ENCODE measurements at regions of chr12 and their contacts with region 1.

Region 1: DNA sequence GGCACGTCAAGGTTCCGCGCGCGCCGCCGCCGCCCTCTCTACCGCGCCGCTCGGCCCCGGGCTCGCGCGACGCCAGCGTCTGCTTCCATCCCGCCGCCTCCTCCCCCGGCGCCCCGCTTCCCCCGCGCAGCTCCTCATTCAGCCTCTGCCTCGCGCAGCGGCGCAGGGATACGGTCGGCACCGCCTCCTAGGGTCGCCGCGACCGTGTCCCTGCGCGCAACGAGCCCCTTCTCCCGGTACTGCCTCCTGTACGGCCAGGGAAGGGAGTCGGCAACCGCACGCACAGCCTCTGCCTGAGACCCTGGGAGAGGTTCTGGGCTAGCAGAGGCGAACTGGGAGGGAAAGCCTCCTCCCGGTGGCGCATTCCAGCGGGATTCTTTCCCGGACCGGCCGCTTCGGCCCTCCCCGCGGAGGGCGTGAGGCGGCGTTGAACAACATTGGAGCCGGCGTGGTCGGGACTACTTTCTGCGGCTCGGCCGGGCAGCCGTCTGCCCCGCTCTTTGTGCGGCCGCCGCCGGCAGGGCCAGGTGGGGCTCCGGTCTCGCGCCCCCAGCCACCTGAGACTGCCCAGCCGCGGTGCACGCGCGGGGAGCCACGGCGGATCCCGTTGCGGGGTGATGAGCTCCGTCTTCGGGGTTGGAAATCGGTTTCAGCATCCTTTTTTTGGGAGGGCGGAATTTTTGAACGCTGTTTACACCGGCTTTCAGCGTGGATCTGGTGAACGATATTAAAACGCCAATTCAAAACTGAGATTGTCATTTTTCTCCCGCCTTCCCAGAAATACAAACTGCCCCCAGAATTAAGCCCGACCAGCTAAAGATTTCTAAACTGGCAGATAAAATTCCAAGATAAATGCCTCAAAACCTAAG is at the start of gene LRP6:
- DNase-seq: peak; percentile 92
- H3K4me3 Mint-ChIP-seq: peak within 1 kb of the TSS; percentile 92
- H3K27ac Mint-ChIP-seq: peak within 1 kb of the TSS; percentile 97
- H3K4me1 Mint-ChIP-seq: peaks cover 22% of the 10 kb centered on the region
- H3K27me3 Mint-ChIP-seq: no peaks in the 10 kb centered on the region
- CTCF ChIP-seq: peak; percentile 21
- total RNA-seq, gene LRP6: 64.7 and 74.8 TPM in 2 replicates

Region 2: GRCh38 chr12:12081836-12082497 is 185.1 kb before region 1 on chr12:
- CTCF ChIA-PET with region 1: interaction called, 4 read pairs
- intact Hi-C with region 1: loop called (anchors 5 kb)
- DNase-seq: peak; percentile 18
- H3K4me3 Mint-ChIP-seq: no peak overlapping the region
- H3K27ac Mint-ChIP-seq: peak overlapping the region; percentile 30
- H3K4me1 Mint-ChIP-seq: no peaks in the 10 kb centered on the region
- H3K27me3 Mint-ChIP-seq: no peaks in the 10 kb centered on the region
- CTCF ChIP-seq: no peak

Region 3: GRCh38 chr12:12182703-12183365 is 84.3 kb before region 1 on chr12:
- CTCF ChIA-PET with region 1: no interaction called
- intact Hi-C with region 1: loop called (anchors 5 kb)
- DNase-seq: peak; percentile 7
- H3K4me3 Mint-ChIP-seq: no peak overlapping the region
- H3K27ac Mint-ChIP-seq: peak overlapping the region; percentile 50
- H3K4me1 Mint-ChIP-seq: peaks cover 64% of the 10 kb centered on the region
- H3K27me3 Mint-ChIP-seq: no peaks in the 10 kb centered on the region
- CTCF ChIP-seq: no peak

Region 4: GRCh38 chr12:12214635-12215131 is 52.4 kb before region 1 on chr12:
- CTCF ChIA-PET with region 1: interaction called, 6 read pairs
- intact Hi-C with region 1: loop called (anchors 5 kb)
- DNase-seq: peak; percentile 7
- H3K4me3 Mint-ChIP-seq: peak overlapping the region; percentile 29
- H3K27ac Mint-ChIP-seq: peak overlapping the region; percentile 63
- H3K4me1 Mint-ChIP-seq: peaks cover 92% of the 10 kb centered on the region
- H3K27me3 Mint-ChIP-seq: no peaks in the 10 kb centered on the region
- CTCF ChIP-seq: no peak

Region 5: DNA sequence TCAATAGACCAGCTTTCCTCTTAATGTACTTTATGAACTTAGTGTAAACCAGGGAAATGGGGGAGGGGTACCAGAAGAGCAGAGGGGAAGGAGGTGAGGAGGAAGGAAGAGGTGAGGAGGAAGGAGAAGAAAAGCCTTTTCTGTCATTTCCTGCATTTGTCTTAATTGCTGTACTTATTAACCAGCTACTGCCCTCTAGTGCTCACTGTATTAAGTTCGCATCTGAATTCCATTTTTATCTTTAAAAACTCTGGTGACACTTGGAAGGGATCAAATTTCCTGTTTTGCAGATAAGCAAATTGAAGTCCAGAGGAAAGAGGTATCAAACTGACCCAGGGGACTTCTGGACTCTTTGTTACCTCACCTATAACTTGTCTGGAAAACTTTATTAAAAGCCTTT is 60.7 kb after region 1 on chr12:
- CTCF ChIA-PET with region 1: interaction called, 3 read pairs
- intact Hi-C with region 1: loop called (anchors 10 kb)
- DNase-seq: peak; percentile 22
- H3K4me3 Mint-ChIP-seq: no peak overlapping the region
- H3K27ac Mint-ChIP-seq: peak overlapping the region; percentile 64
- H3K4me1 Mint-ChIP-seq: peaks cover 42% of the 10 kb centered on the region
- H3K27me3 Mint-ChIP-seq: no peaks in the 10 kb centered on the region
- CTCF ChIP-seq: no peak

Region 6: GRCh38 chr12:12521044-12521485 is 254.0 kb after region 1 on chr12:
- CTCF ChIA-PET with region 1: no interaction called
- intact Hi-C with region 1: no loop called
- DNase-seq: no peak
- H3K4me3 Mint-ChIP-seq: no peak overlapping the region
- H3K27ac Mint-ChIP-seq: no peak overlapping the region
- H3K4me1 Mint-ChIP-seq: no peaks in the 10 kb centered on the region
- H3K27me3 Mint-ChIP-seq: no peaks in the 10 kb centered on the region
- CTCF ChIP-seq: no peak

Measured in Calu3 (cell line).